ENCODE measurements at regions of chr1 and their contacts with region 1.

Region 1: GRCh38 chr1:202998836-202999750 is 8.1 kb upstream of the TMEM183A start:
- DNase-seq: no peak
- H3K4me3 ChIP-seq: peak overlapping the region in 1 of 8 donors; percentile 42
- H3K27ac ChIP-seq: peak overlapping the region in 4 of 8 donors; percentile 25 to 66 (median 53)
- H3K4me1 ChIP-seq: peaks cover 0 to 15% (median 10%) of the 10 kb centered on the region in 6 donors
- H3K27me3 ChIP-seq: peaks cover 0 to 6% (median 0%) of the 10 kb centered on the region in 7 donors
- CTCF ChIP-seq: peak; percentile 55 to 83 (median 78)
- POLR2A ChIP-seq: no peak

Region 2: DNA sequence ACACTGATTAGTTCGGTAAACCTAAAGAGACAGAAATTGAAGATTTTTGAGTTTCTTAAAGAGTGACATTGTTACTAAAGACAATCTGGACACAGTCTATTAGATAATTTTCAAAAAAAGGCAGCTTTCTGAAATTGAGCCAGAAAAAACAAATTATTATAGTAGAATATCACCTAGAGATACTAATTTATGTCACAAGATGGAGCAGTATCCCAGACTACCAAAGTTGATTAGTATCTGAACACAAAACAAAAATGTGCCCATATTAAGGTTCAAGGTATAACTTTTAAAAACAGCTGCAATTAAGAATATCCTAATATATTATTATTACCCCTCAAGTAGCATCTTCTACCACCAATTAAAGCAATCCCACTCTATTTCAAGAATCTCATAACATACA is 248.3 kb before region 1 on chr1:
- intact Hi-C with region 1: loop called (anchors 10 kb)
- DNase-seq: no peak
- H3K4me3 ChIP-seq: no peak overlapping the region
- H3K27ac ChIP-seq: no peak overlapping the region
- H3K4me1 ChIP-seq: no peaks in the 10 kb centered on the region
- H3K27me3 ChIP-seq: no peaks in the 10 kb centered on the region
- CTCF ChIP-seq: peak in 1 of 11 experiments; percentile 9
- POLR2A ChIP-seq: no peak

Region 3: GRCh38 chr1:202926720-202927491 is 72.2 kb before region 1 on chr1 and contains the start of gene KLHL12:
- intact Hi-C with region 1: loop called (anchors 5 kb)
- DNase-seq: peak; percentile 99
- H3K4me3 ChIP-seq: peak within 1 kb of the TSS; percentile 65 to 90 (median 84)
- H3K27ac ChIP-seq: peak within 1 kb of the TSS; percentile 92 to 99 (median 98)
- H3K4me1 ChIP-seq: peaks cover 21 to 55% (median 49%) of the 10 kb centered on the region in 6 donors
- H3K27me3 ChIP-seq: no peaks in the 10 kb centered on the region
- CTCF ChIP-seq: peak; percentile 37 to 78 (median 69)
- POLR2A ChIP-seq: peak; percentile 62 to 92 (median 84)
- total RNA-seq, gene KLHL12: 20.6 to 35.4 (median 24.6) TPM

Measured in spleen (tissue), 13 donors.